Activated CD8-positive, alpha-beta T cell treated with anti-CD3 and anti-CD28 coated beads for 36 hours (primary cell): ENCODE measurements at regions of chr14 and their contacts with region 1.

Region 1: GRCh38 chr14:91360490-91361232 is 57.0 kb downstream of the CCDC88C start:
- DNase-seq: no peak
- ATAC-seq: no peak
- H3K4me3 Mint-ChIP-seq: no peak overlapping the region
- H3K27ac Mint-ChIP-seq: peak overlapping the region; percentile 28
- H3K4me1 Mint-ChIP-seq: peaks cover 87% of the 10 kb centered on the region
- H3K27me3 Mint-ChIP-seq: no peaks in the 10 kb centered on the region
- CTCF ChIP-seq: no peak

Region 2: GRCh38 chr14:90399541-90400444 is 960.9 kb before region 1 on chr14:
- CTCF ChIA-PET with region 1: no interaction called
- POLR2A ChIA-PET with region 1: no interaction called
- intact Hi-C with region 1: no loop called
- DNase-seq: peak; percentile 94
- ATAC-seq: peak; percentile 55
- H3K4me3 Mint-ChIP-seq: peak overlapping the region; percentile 94
- H3K27ac Mint-ChIP-seq: peak overlapping the region; percentile 99
- H3K4me1 Mint-ChIP-seq: peaks cover 56% of the 10 kb centered on the region
- H3K27me3 Mint-ChIP-seq: no peaks in the 10 kb centered on the region
- CTCF ChIP-seq: peak; percentile 98

Region 3: DNA sequence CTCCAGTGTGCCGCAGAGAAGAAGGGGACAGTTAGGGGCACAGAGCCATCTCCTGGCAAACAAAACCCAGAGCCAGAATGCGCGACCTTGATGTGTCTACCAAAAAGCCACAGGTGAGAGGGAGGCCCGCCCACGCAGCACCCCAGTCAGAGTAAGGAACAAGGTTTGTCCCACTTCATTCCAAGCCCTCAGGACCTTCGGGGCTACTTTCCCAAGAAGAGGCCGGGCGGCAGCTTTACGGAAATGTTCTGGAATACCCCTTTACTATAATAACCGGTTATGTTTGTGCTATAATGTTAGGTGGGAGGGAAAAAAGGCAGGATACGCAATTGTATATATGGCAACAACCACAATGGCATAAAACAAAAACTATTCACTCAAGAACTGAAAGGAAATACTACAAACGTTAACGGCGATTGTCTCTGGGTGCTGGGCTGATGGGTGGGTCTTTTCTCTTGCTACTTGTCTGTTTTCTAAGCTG is 44.6 kb after region 1 on chr14:
- CTCF ChIA-PET with region 1: interaction called, 141 read pairs
- POLR2A ChIA-PET with region 1: interaction called, 11 read pairs
- intact Hi-C with region 1: loop called (anchors 10 kb)
- DNase-seq: peak; percentile 89
- ATAC-seq: peak; percentile 27
- H3K4me3 Mint-ChIP-seq: peak overlapping the region; percentile 59
- H3K27ac Mint-ChIP-seq: peak overlapping the region; percentile 98
- H3K4me1 Mint-ChIP-seq: peaks cover 87% of the 10 kb centered on the region
- H3K27me3 Mint-ChIP-seq: no peaks in the 10 kb centered on the region
- CTCF ChIP-seq: no peak

Region 4: GRCh38 chr14:91536327-91536726 is 175.7 kb after region 1 on chr14:
- CTCF ChIA-PET with region 1: no interaction called
- POLR2A ChIA-PET with region 1: no interaction called
- intact Hi-C with region 1: no loop called
- DNase-seq: no peak
- ATAC-seq: no peak
- H3K4me3 Mint-ChIP-seq: no peak overlapping the region
- H3K27ac Mint-ChIP-seq: no peak overlapping the region
- H3K4me1 Mint-ChIP-seq: no peaks in the 10 kb centered on the region
- H3K27me3 Mint-ChIP-seq: peaks cover 6% of the 10 kb centered on the region
- CTCF ChIP-seq: no peak